Heart left ventricle (tissue), 16 donors: ENCODE measurements at regions of chr10 and their contacts with region 1.

Region 1: GRCh38 chr10:56329961-56330360 is 31.1 kb downstream of the ZWINT start:
- DNase-seq: no peak
- ATAC-seq: no peak
- H3K4me3 ChIP-seq: no peak overlapping the region
- H3K27ac ChIP-seq: no peak overlapping the region
- H3K4me1 ChIP-seq: no peaks in the 10 kb centered on the region
- H3K27me3 ChIP-seq: no peaks in the 10 kb centered on the region
- CTCF ChIP-seq: no peak
- POLR2A ChIP-seq: no peak

Region 2: DNA sequence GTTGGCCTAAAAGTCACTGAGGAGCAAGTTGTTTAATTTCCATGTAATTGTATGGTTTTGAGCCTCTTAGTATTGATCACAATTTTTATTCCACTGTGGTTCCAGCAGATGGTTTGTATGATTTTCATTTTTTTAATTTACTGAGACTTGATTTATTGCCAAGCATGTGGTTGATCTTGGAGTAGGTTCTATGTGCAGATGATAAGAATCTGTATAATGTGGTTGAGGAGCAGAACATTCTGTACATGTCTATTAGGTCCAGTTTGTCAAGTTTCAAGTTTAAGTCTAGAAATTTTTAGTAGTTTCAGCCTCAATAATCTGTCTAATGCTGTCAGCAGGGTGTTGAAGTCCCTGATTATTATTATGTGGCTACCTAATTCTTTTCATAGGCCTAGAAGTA is 53.8 kb after region 1 on chr10:
- intact Hi-C with region 1: loop called in 1 of 10 experiments (anchors 10 kb)
- DNase-seq: no peak
- ATAC-seq: no peak
- H3K4me3 ChIP-seq: no peak overlapping the region
- H3K27ac ChIP-seq: no peak overlapping the region
- H3K4me1 ChIP-seq: no peaks in the 10 kb centered on the region
- H3K27me3 ChIP-seq: no peaks in the 10 kb centered on the region
- CTCF ChIP-seq: no peak
- POLR2A ChIP-seq: no peak